Activated B cell treated with CpG ODN at 0.5 μM for 24 hours (primary cell): ENCODE measurements at regions of chr12 and their contacts with region 1.

Region 1: DNA sequence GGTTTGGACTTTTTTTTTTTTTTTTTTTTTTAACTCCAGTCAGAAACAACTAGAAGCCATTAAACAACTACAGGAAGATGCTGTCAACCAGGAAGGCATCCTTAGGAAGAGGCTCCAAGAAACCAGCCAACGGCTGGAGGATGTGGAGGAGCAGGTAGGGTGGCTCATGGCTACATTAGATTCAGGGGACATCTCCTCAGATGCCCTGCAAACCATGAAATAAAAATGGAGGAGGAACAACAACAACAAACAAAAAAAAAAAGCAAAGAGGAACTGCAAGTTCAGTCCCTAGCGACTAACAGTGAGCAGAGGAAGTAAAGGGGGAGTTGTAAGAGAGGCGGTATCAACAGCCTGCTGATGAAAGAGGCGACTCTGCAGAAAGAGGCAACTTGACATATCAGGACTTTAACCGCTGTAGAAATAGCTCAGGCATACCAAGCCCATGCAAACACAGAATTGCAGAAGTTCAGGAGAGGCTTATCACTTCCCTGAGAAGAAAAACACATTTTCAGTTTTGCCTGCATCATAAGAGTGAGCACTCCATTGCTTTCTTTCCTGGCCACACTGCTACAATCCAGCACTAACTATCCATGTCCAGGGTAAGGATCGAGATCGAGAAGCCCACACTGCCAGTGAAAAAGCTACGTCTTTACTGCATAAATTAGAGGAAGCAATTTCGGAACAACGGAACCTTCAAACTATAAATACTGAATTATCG is 103.5 kb upstream of the BCAT1 start:
- DNase-seq: peak; percentile 68
- ATAC-seq: peak; percentile 87
- H3K4me3 Mint-ChIP-seq: peak overlapping the region; percentile 95
- H3K27ac Mint-ChIP-seq: peak overlapping the region; percentile 96
- H3K4me1 Mint-ChIP-seq: peaks cover 48% of the 10 kb centered on the region
- H3K27me3 Mint-ChIP-seq: no peaks in the 10 kb centered on the region
- CTCF ChIP-seq: no peak

Region 2: GRCh38 chr12:24728366-24728765 is 324.0 kb before region 1 on chr12:
- CTCF ChIA-PET with region 1: no interaction called
- POLR2A ChIA-PET with region 1: no interaction called
- intact Hi-C with region 1: loop called (anchors 5 kb)
- DNase-seq: no peak
- ATAC-seq: peak; percentile 26
- H3K4me3 Mint-ChIP-seq: no peak overlapping the region
- H3K27ac Mint-ChIP-seq: peak overlapping the region; percentile 85
- H3K4me1 Mint-ChIP-seq: peaks cover 98% of the 10 kb centered on the region
- H3K27me3 Mint-ChIP-seq: no peaks in the 10 kb centered on the region
- CTCF ChIP-seq: no peak

Region 3: GRCh38 chr12:24937553-24938244 is 114.7 kb before region 1 on chr12:
- CTCF ChIA-PET with region 1: no interaction called
- POLR2A ChIA-PET with region 1: no interaction called
- intact Hi-C with region 1: no loop called
- DNase-seq: no peak
- ATAC-seq: no peak
- H3K4me3 Mint-ChIP-seq: no peak overlapping the region
- H3K27ac Mint-ChIP-seq: no peak overlapping the region
- H3K4me1 Mint-ChIP-seq: peaks cover 1% of the 10 kb centered on the region
- H3K27me3 Mint-ChIP-seq: no peaks in the 10 kb centered on the region
- CTCF ChIP-seq: no peak

Region 4: DNA sequence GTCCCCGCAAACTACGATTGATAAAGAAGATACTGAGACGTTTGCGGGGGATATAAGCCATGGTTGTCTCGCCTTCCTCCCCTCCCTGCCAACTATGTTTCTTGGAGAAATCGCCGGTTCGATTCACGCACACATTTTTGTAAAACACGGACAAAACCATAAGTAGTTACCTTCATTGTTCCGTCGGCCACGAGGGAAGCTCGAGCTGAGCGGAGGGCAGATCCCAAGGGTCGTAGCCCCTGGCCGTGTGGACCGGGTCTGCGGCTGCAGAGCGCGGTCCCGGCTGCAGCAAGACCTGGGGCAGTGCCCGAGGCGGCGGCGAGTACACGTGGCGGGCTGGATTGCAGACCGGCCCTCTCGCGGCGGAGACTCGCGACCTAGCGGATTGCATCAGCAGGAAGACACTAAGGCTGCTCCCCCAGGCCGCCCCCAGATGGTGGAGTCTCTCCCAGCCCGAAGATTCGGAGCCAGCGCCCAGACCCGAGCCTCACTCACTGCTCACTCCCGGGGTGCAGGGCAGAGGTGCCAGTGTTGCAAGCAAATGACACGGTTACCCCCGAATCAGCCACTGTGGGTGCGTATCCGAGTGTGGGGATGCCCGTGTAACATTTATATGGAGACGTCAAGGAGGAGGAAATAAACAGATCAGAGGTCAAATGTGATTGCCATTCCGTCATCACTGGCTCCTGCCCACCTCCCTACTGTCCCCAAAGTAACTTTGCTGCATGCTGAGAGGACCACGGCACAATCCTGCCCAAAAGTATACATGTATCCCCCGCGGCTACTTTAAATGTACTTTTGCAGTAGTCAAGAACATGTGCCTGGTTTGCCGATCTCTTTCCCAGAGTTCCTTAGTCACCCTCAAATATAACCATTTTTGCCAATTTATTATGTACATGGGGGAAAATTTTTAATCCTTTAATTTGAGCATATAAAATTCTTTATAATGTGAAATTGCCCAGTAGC is 103.3 kb before region 1 on chr12 and contains the start of gene BCAT1:
- CTCF ChIA-PET with region 1: no interaction called
- POLR2A ChIA-PET with region 1: no interaction called
- intact Hi-C with region 1: loop called (anchors 2 kb)
- DNase-seq: peak; percentile 64
- ATAC-seq: peak; percentile 72
- H3K4me3 Mint-ChIP-seq: peak within 1 kb of the TSS; percentile 97
- H3K27ac Mint-ChIP-seq: peak within 1 kb of the TSS; percentile 92
- H3K4me1 Mint-ChIP-seq: peaks cover 72% of the 10 kb centered on the region
- H3K27me3 Mint-ChIP-seq: peaks cover 5% of the 10 kb centered on the region
- CTCF ChIP-seq: no peak
- total RNA-seq, gene BCAT1: 69.6 and 69.8 TPM in 2 replicates

Region 5: GRCh38 chr12:25005376-25005775 is 47.0 kb before region 1 on chr12:
- CTCF ChIA-PET with region 1: interaction called, 5 read pairs
- POLR2A ChIA-PET with region 1: interaction called, 486 read pairs
- intact Hi-C with region 1: loop called (anchors 1 kb)
- DNase-seq: no peak
- ATAC-seq: peak; percentile 65
- H3K4me3 Mint-ChIP-seq: peak overlapping the region; percentile 66
- H3K27ac Mint-ChIP-seq: peak overlapping the region; percentile 86
- H3K4me1 Mint-ChIP-seq: peaks cover 74% of the 10 kb centered on the region
- H3K27me3 Mint-ChIP-seq: no peaks in the 10 kb centered on the region
- CTCF ChIP-seq: no peak

Region 6: DNA sequence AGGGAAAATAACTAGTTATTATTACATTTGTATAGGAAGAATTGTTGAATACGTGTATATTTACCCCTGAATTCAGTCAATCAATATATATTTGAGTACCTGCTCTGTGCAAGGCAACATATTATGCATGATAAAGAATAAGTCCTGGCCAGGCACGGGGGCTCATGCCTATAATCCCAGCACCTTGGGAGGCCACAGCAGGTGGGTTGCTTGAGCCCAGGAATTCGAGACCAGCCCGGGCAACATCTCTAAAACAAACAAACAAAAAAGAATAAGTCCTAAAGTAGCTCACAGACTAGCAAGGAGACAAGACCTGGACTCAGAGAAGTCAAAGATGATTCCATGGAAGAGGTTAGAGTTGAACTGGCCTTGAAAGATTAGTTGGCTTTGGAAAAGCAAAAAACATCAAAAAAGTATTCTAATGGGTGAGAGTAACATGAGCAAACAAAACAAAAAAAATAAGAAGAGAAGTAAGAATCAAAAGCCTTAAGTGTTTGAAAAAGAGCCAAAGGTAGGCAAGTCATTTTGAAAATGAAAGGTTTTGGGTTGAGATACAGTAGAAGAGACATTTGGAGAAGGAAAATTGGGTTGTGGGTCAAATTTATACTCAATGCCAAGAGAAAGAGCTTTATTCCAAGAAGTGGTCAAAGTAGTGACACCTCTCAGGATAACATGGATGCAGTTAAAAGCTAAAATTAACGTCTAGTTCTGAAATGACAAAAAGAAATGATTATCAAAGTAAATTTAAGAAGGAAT is 11.7 kb after region 1 on chr12:
- CTCF ChIA-PET with region 1: interaction called, 3 read pairs
- POLR2A ChIA-PET with region 1: interaction called, 36 read pairs
- intact Hi-C with region 1: loop called (anchors 1 kb)
- DNase-seq: no peak
- ATAC-seq: no peak
- H3K4me3 Mint-ChIP-seq: no peak overlapping the region
- H3K27ac Mint-ChIP-seq: peak overlapping the region; percentile 81
- H3K4me1 Mint-ChIP-seq: peaks cover 77% of the 10 kb centered on the region
- H3K27me3 Mint-ChIP-seq: no peaks in the 10 kb centered on the region
- CTCF ChIP-seq: no peak

Region 7: GRCh38 chr12:25107920-25108319 is 55.6 kb after region 1 on chr12:
- CTCF ChIA-PET with region 1: no interaction called
- POLR2A ChIA-PET with region 1: interaction called, 28 read pairs
- intact Hi-C with region 1: loop called (anchors 2 kb)
- DNase-seq: peak; percentile 17
- ATAC-seq: peak; percentile 84
- H3K4me3 Mint-ChIP-seq: peak overlapping the region; percentile 47
- H3K27ac Mint-ChIP-seq: peak overlapping the region; percentile 88
- H3K4me1 Mint-ChIP-seq: peaks cover 20% of the 10 kb centered on the region
- H3K27me3 Mint-ChIP-seq: no peaks in the 10 kb centered on the region
- CTCF ChIP-seq: no peak

Region 8: DNA sequence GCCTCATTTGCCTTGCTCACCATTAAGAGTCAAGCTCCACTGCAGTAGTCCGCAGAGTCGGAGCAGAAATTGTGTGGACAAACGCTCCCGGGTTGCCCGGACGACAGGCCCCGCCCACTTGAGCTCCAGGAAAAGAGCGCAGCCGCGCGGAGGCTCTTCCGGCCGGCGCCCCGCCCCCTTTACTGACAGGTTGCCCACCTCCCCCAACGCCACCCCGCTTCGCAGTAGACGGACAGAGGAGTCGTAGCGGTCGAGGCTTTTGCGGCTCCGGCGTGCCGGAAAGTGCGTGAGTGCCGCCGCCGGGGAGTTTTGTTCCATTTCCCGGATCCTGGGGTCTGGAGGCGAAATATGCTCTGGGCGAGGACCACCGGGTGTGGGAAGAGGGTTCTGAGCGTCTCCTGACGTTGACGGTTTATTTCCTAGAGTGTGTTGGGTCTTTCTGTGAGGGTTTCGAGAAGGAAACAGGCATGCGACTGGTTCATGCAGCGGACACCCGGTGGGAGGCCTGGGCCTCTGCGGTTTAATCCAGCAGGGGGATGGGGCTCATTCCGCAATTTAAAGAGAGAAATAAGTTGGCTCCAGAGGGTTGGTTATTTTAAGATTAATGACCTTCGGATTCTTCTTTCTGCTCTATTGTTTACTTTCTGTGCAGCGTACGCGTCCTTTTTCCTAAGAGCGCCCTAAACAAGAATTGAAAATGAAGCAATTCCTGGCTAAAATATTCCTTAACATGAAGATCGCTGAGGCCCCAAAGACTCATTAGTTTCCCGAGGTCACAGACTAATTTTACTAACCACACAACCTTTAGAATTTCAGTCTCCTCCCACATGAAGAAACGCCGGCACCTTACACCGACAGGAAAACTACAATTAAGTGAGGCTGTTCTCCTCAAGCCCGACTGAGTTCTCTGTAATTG is 143.0 kb after region 1 on chr12 and contains the starts of genes DNAI7 and ETFRF1:
- CTCF ChIA-PET with region 1: no interaction called
- POLR2A ChIA-PET with region 1: no interaction called
- intact Hi-C with region 1: loop called (anchors 1 kb)
- DNase-seq: peak; percentile 98
- ATAC-seq: peak; percentile 97
- H3K4me3 Mint-ChIP-seq: peak within 1 kb of the TSS; percentile 94
- H3K27ac Mint-ChIP-seq: peak within 1 kb of the TSS; percentile 96
- H3K4me1 Mint-ChIP-seq: peaks cover 34% of the 10 kb centered on the region
- H3K27me3 Mint-ChIP-seq: no peaks in the 10 kb centered on the region
- CTCF ChIP-seq: no peak
- total RNA-seq, gene DNAI7: 0.15 and 0.27 TPM in 2 replicates
- total RNA-seq, gene ETFRF1: 15.4 and 17.6 TPM in 2 replicates

Region 9: GRCh38 chr12:25243680-25243990 is 191.3 kb after region 1 on chr12:
- CTCF ChIA-PET with region 1: no interaction called
- POLR2A ChIA-PET with region 1: no interaction called
- intact Hi-C with region 1: no loop called
- DNase-seq: no peak
- ATAC-seq: no peak
- H3K4me3 Mint-ChIP-seq: no peak overlapping the region
- H3K27ac Mint-ChIP-seq: no peak overlapping the region
- H3K4me1 Mint-ChIP-seq: peaks cover 23% of the 10 kb centered on the region
- H3K27me3 Mint-ChIP-seq: no peaks in the 10 kb centered on the region
- CTCF ChIP-seq: no peak